HCT116 (cell line): ENCODE measurements at regions of chr17 and their contacts with region 1.

Region 1: DNA sequence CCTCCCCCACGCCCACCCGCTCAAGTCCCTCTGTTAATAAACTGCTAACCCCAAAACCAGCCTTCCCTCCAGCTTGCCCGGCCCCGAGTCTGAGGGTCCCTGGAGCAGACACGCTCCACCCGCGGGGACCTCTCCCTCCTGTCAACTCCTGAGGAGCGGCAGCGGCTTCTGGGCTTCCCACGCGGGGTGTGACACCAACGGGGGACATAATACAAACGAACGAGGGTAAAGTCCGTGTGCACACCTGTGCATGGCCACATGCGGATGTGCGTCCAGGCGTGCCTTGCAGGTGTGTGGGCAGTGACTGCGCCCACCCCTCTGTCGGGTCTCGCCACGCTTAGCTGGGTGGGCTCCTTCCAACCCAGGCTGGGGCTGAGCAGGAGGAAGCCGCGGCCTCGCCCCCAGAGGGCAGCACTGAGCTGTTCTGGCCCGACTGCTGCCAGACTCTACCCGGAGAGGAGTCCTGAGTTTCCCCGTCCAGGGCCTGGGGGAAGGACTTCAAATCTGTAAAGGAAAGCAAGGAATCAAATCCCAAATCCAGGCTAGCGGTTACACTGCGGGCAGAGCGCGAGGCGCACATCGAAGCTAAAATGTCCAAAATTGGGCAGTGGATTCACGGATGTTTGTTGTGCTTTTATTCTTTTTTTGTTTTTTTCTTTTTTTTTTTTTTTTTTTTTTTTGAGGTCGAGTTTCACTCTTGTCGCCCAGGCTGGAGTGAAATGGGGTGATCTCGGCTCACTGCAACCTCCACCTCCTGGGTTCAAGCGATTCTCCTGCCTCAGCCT is 24.2 kb upstream of the KRT17 start:
- DNase-seq: peak; percentile 77
- ATAC-seq: peak; percentile 81
- H3K4me3 ChIP-seq: peak overlapping the region; percentile 38 to 53
- H3K27ac ChIP-seq: peak overlapping the region; percentile 41
- H3K4me1 ChIP-seq: peaks cover 30 to 77% of the 10 kb centered on the region in 2 experiments
- H3K27me3 ChIP-seq: no peaks in the 10 kb centered on the region
- CTCF ChIP-seq: peak; percentile 90 to 98 (median 95)
- POLR2A ChIP-seq: no peak
- RAD21 ChIP-seq: peak; percentile 92

Region 2: DNA sequence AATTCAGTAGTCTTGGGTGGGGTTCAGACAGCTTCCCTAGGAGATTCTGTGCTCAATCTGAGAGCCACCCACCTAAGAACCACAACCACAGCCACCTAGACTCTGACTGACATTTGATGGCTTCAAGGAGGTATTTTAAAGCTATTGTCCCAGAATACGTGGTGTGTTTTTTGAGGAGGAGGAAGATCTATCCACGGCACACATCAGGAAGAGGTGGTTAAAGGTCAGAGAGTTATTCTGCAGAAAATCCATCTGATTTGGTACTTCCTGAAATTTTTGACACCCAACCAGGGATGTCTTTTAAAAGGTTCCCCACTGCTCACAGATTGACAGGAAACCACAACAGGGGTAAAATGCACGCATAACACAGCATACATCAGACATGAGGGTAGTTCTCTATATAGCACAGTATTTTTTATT is 1026.1 kb before region 1 on chr17:
- CTCF ChIA-PET with region 1: interaction called, 6 read pairs
- POLR2A ChIA-PET with region 1: no interaction called
- RAD21 ChIA-PET with region 1: no interaction called
- intact Hi-C with region 1: loop called (anchors 5 kb)
- DNase-seq: no peak
- ATAC-seq: no peak
- H3K4me3 ChIP-seq: no peak overlapping the region
- H3K27ac ChIP-seq: no peak overlapping the region
- H3K4me1 ChIP-seq: peaks cover 2 to 8% of the 10 kb centered on the region in 2 experiments; a peak in 3 of 4 replicates
- H3K27me3 ChIP-seq: no peaks in the 10 kb centered on the region
- CTCF ChIP-seq: no peak
- POLR2A ChIP-seq: no peak
- RAD21 ChIP-seq: no peak

Region 3: DNA sequence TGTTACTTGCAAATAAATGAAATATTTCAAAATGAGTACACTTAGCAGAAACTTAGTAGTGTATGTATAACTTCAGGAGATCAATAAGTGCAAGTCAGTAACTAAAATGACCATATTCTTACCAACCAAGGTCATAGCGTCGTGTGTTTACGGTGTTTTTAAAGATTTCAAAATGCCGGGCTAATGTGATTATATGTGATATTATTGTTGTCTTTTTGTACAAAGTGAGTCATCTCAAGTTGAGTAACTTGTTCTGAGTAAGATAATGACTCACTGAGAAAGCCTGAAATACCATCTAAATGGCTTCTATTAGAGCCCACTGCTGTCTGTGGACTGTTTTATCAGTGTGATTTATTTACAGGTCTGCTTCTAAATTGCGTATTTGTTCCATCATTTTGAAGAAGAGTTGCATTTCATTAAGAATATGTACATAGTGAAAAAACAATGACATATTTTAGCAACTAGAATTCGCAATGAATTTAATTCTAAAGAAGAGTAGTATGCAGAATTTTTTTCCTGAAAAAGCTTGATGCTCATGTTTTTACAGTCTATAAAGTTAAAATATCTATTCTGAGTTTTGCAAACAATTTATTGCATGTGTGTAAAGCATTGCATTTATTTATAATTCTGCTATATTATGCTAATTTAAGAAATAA is 794.3 kb before region 1 on chr17:
- CTCF ChIA-PET with region 1: interaction called, 13 read pairs
- POLR2A ChIA-PET with region 1: no interaction called
- RAD21 ChIA-PET with region 1: no interaction called
- intact Hi-C with region 1: loop called (anchors 2 kb)
- DNase-seq: peak; percentile 71
- ATAC-seq: peak; percentile 71
- H3K4me3 ChIP-seq: no peak overlapping the region
- H3K27ac ChIP-seq: peak overlapping the region; percentile 25; the same call in 1 of the 2 replicates
- H3K4me1 ChIP-seq: peaks cover 11 to 50% of the 10 kb centered on the region in 2 experiments
- H3K27me3 ChIP-seq: no peaks in the 10 kb centered on the region
- CTCF ChIP-seq: no peak
- POLR2A ChIP-seq: no peak
- RAD21 ChIP-seq: 0 out of 2 replicates have a peak, but pooled peaks have one; percentile 17

Region 4: DNA sequence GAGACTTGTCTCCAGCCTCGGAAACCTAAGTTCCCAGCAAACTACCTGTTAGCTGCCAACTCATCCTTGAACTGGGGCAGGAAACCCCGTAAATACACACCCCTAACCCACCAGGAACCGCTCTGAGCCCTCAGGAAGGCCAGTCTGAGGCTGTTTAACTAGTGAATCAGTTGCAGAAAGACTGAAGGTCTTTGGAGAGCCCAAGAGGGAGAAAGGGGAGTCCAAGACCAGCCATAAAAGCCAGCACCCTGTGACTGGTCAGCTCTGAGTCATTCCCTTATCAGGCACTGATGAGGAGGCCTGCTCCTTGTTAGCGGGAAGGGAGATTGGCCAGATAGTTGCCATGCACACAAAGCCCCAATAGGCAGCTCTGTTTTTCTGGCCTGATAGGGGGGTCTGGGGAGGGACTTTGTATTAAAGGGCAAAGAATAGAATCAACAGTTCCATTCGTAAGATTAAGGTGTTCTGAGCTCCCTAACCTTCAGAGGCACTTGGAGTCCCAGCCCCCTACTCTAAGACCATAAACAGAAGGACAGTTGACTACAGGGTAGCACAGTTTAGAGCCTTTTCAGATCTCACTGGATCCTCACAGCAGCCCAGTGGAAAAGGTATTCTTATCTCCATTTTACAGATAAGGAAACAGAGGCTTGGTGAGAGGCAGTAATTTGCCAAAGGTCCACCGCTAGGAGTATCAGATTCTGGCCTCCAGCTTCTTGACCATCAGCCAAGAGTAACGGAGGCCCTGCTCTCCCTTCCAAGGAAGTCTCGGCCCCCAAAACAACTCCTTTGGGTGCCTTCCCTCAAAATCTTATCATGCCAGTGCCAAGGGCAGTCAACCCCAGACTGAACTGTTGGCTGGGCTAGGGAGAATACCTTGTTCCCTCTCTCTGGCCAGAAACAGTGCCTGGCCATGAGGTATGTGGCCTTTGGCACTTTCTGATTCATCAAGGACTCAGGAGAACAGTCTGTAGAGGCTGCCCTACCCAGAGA is 118.2 kb before region 1 on chr17:
- CTCF ChIA-PET with region 1: interaction called, 17 read pairs
- POLR2A ChIA-PET with region 1: interaction called, 6 read pairs
- RAD21 ChIA-PET with region 1: no interaction called
- intact Hi-C with region 1: no loop called
- DNase-seq: peak; percentile 86
- ATAC-seq: peak; percentile 66
- H3K4me3 ChIP-seq: peak overlapping the region; percentile 18 to 95
- H3K27ac ChIP-seq: peak overlapping the region; percentile 99
- H3K4me1 ChIP-seq: peaks cover 36 to 73% of the 10 kb centered on the region in 2 experiments
- H3K27me3 ChIP-seq: no peaks in the 10 kb centered on the region
- CTCF ChIP-seq: no peak
- POLR2A ChIP-seq: peak; percentile 45
- RAD21 ChIP-seq: no peak

Region 5: GRCh38 chr17:41588126-41588810 is 60.3 kb before region 1 on chr17:
- CTCF ChIA-PET with region 1: interaction called, 11 read pairs
- POLR2A ChIA-PET with region 1: no interaction called
- RAD21 ChIA-PET with region 1: no interaction called
- intact Hi-C with region 1: loop called (anchors 5 kb)
- DNase-seq: no peak
- ATAC-seq: no peak
- H3K4me3 ChIP-seq: no peak overlapping the region
- H3K27ac ChIP-seq: no peak overlapping the region
- H3K4me1 ChIP-seq: peaks cover 0 to 8% of the 10 kb centered on the region in 2 experiments; a peak in 1 of 4 replicates
- H3K27me3 ChIP-seq: no peaks in the 10 kb centered on the region
- CTCF ChIP-seq: no peak
- POLR2A ChIP-seq: no peak
- RAD21 ChIP-seq: no peak